ENCODE measurements at regions of chr9 and their contacts with region 1.

Region 1: GRCh38 chr9:136769710-136770191 is 5.4 kb upstream of the LCN15 start:
- DNase-seq: peak; percentile 76
- CTCF ChIP-seq: peak; percentile 74

Region 2: GRCh38 chr9:136784249-136784996 is 14.7 kb after region 1 on chr9:
- CTCF ChIA-PET with region 1: interaction called, 79 read pairs
- POLR2A ChIA-PET with region 1: no interaction called
- DNase-seq: no peak
- CTCF ChIP-seq: peak; percentile 5